Gastrocnemius medialis (tissue), 4 donors: ENCODE measurements at regions of chr7 and their contacts with region 1.

Region 1: GRCh38 chr7:89837515-89837914 is 316.8 kb upstream of the STEAP1 start:
- DNase-seq: no peak
- ATAC-seq: peak in 1 of 2 donors; percentile 54
- H3K4me3 ChIP-seq: no peak overlapping the region
- H3K27ac ChIP-seq: no peak overlapping the region
- H3K4me1 ChIP-seq: no peaks in the 10 kb centered on the region
- H3K27me3 ChIP-seq: no peaks in the 10 kb centered on the region
- CTCF ChIP-seq: no peak
- POLR2A ChIP-seq: no peak

Region 2: GRCh38 chr7:89826557-89826956 is 11.0 kb before region 1 on chr7:
- in situ Hi-C with region 1: no loop called
- intact Hi-C with region 1: loop called (anchors 1 kb)
- DNase-seq: no peak
- ATAC-seq: no peak
- H3K4me3 ChIP-seq: no peak overlapping the region
- H3K27ac ChIP-seq: no peak overlapping the region
- H3K4me1 ChIP-seq: no peaks in the 10 kb centered on the region
- H3K27me3 ChIP-seq: no peaks in the 10 kb centered on the region
- CTCF ChIP-seq: no peak
- POLR2A ChIP-seq: no peak

Region 3: DNA sequence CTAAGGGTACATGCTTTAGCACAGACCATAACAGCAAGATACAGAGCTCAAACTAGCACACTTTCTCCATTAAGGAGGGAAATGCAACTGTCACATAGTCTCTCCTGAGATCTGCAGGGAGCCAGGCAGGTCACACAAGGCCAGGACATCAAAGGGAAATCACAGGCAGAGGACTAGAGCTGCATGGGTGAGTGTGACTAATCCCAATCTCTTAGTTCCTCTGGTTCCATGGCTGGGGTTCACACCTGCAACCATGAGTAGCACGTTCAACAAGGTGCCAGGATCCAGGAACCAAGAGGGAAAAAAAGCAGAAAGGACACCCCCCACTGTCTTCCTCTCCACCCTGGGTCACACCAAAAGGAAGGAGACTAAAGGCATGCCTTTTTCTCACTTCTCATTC is 20.3 kb after region 1 on chr7:
- in situ Hi-C with region 1: no loop called
- intact Hi-C with region 1: no loop called
- DNase-seq: no peak
- ATAC-seq: no peak
- H3K4me3 ChIP-seq: no peak overlapping the region
- H3K27ac ChIP-seq: no peak overlapping the region
- H3K4me1 ChIP-seq: no peaks in the 10 kb centered on the region
- H3K27me3 ChIP-seq: no peaks in the 10 kb centered on the region
- CTCF ChIP-seq: no peak
- POLR2A ChIP-seq: no peak